Upper lobe of right lung (tissue), 1 donor: ENCODE measurements at regions of chr16 and their contacts with region 1.

Region 1: DNA sequence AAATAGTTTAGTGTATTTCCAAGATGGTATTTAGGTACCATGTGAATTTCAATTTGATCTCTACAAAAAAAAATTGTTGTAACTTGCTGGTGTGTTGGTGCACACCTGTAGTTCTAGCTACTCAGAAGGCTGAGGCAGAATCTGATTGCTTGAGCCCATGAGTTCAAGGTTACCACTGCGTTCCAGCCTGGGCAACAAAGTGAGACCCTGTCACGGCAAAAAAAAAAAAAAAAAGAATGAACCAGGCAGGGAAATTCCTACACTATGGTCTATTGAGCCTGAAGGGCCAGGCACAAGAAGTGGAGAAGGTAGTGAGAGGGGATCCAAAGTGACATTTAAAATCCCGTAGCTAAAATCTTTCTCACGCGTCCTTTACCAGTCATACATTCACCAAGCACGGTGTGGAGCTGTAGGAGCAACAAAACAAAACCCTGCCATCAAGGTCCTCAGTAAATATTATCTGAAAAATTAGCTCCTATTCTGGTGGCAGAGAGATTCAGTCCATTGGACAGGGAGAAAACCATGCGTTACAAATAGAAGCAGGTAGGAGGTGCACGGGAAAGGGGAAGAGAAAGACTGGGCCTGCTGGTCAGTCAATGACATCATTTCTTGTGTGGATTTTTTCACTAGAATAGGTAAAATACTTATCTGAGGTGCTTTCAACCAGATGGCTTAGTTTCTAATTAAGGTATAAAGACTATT is 27.3 kb downstream of the TXNDC11 start:
- DNase-seq: no peak
- ATAC-seq: no peak
- H3K4me3 ChIP-seq: no peak overlapping the region
- H3K27ac ChIP-seq: no peak overlapping the region
- H3K4me1 ChIP-seq: peaks cover 3% of the 10 kb centered on the region
- H3K27me3 ChIP-seq: no peaks in the 10 kb centered on the region
- CTCF ChIP-seq: no peak

Region 2: DNA sequence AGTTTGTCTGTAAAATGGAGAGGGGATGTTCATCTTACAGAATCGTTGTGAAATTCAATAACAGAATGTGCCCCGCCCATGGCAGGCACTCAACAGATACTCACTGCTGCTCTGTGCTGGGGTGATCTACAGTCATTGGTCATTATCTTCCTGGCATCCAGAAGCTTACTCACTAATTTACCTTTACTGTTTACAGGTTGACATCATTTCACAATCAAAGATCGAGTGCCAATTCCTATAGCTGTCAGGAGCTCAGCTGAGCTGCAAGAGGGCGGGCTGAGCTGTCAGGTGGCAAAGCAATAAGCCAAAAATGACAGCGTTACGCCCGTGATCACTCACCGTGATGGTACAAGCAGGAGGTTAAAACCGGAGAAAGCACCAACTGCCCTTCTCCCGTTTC is 179.9 kb before region 1 on chr16:
- intact Hi-C with region 1: loop called (anchors 10 kb)
- DNase-seq: no peak
- ATAC-seq: no peak
- H3K4me3 ChIP-seq: no peak overlapping the region
- H3K27ac ChIP-seq: no peak overlapping the region
- H3K4me1 ChIP-seq: no peaks in the 10 kb centered on the region
- H3K27me3 ChIP-seq: no peaks in the 10 kb centered on the region
- CTCF ChIP-seq: no peak

Region 3: GRCh38 chr16:11949527-11949926 is 234.1 kb after region 1 on chr16:
- intact Hi-C with region 1: no loop called
- DNase-seq: peak; percentile 68
- ATAC-seq: peak; percentile 98
- H3K4me3 ChIP-seq: no peak overlapping the region
- H3K27ac ChIP-seq: no peak overlapping the region
- H3K4me1 ChIP-seq: no peaks in the 10 kb centered on the region
- H3K27me3 ChIP-seq: no peaks in the 10 kb centered on the region
- CTCF ChIP-seq: peak; percentile 47